K562 (cell line): ENCODE measurements at regions of chr3 and their contacts with region 1.

Region 1: GRCh38 chr3:138935848-138936740 is 10.8 kb downstream of the FOXL2 start:
- DNase-seq: peak; percentile 85 to 91 (median 88)
- ATAC-seq: peak; percentile 88
- H3K4me3 ChIP-seq: peak overlapping the region; percentile 45
- H3K27ac ChIP-seq: peak overlapping the region; percentile 54
- H3K4me1 ChIP-seq: peaks cover 4 to 43% of the 10 kb centered on the region in 2 experiments; a peak in 3 of 5 replicates
- H3K27me3 ChIP-seq: no peaks in the 10 kb centered on the region
- CTCF ChIP-seq: peak; percentile 83 to 88 (median 87)
- EP300 ChIP-seq: no peak
- POLR2A ChIP-seq: peak; percentile 58
- RAD21 ChIP-seq: peak; percentile 55 to 68

Region 2: GRCh38 chr3:138468886-138469285 is 467.2 kb before region 1 on chr3:
- CTCF ChIA-PET with region 1: no interaction called
- POLR2A ChIA-PET with region 1: no interaction called
- in situ Hi-C with region 1: loop called (anchors 10 kb)
- intact Hi-C with region 1: no loop called
- DNase-seq: no peak
- ATAC-seq: no peak
- H3K4me3 ChIP-seq: no peak overlapping the region
- H3K27ac ChIP-seq: no peak overlapping the region
- H3K4me1 ChIP-seq: no peaks in the 10 kb centered on the region; a peak in 2 of 5 replicates
- H3K27me3 ChIP-seq: peaks cover 0 to 10% of the 10 kb centered on the region in 2 experiments; a peak in 2 of 5 replicates
- CTCF ChIP-seq: no peak
- EP300 ChIP-seq: no peak
- POLR2A ChIP-seq: no peak
- RAD21 ChIP-seq: no peak

Region 3: GRCh38 chr3:139427283-139427993 is 491.3 kb after region 1 on chr3:
- CTCF ChIA-PET with region 1: no interaction called
- POLR2A ChIA-PET with region 1: no interaction called
- in situ Hi-C with region 1: no loop called
- intact Hi-C with region 1: no loop called
- DNase-seq: peak; percentile 69 to 72 (median 70)
- ATAC-seq: peak; percentile 96
- H3K4me3 ChIP-seq: no peak overlapping the region
- H3K27ac ChIP-seq: no peak overlapping the region
- H3K4me1 ChIP-seq: no peaks in the 10 kb centered on the region
- H3K27me3 ChIP-seq: no peaks in the 10 kb centered on the region
- CTCF ChIP-seq: peak; percentile 61 to 88 (median 75); a peak in 5 of 6 replicates
- EP300 ChIP-seq: no peak
- POLR2A ChIP-seq: no peak
- RAD21 ChIP-seq: peak; percentile 86 to 90

Region 4: DNA sequence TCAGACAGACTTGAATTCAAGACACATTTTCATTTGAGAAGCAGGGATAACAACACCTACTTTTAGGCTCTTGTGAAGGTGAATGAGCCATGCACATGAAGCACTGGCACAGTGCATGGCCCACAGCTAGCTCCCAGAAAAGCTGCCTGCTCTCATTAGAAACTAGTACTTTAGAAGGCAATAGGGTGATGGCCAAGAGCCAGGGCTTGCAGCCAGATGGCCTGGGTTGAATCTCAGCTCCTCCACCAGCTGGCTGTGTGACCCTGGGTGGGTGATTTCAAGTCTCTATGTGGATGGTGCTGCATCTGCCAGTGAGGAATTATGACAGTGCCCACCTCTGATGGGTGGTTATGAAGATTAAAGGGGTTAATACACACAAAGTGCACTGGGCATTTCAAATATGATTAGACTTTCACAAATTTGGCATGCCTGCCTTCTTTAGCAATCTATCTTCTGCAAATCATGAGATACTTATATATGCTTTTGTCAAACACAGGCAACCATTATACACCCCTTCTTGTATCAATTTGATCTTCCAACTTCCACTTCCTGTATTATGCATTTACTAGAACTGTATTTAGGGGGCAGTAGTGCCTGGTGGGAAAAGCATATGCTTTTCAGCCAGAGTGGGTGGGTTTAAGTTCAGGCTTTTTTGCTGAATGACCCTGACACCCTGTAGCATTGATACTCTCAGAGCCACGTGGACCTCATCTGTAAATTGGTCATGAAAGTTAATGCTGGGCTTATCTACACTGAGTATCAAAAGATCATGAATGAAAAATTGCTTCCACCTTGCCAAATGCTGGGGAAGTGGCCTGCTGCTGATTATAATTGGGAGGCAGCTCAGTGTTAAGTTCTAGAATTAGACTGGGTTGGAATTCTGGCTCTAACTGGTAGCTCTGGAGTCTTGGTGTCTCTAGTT is 638.2 kb after region 1 on chr3:
- CTCF ChIA-PET with region 1: no interaction called
- POLR2A ChIA-PET with region 1: no interaction called
- in situ Hi-C with region 1: no loop called
- intact Hi-C with region 1: no loop called
- DNase-seq: no peak
- ATAC-seq: no peak
- H3K4me3 ChIP-seq: no peak overlapping the region
- H3K27ac ChIP-seq: no peak overlapping the region
- H3K4me1 ChIP-seq: no peaks in the 10 kb centered on the region
- H3K27me3 ChIP-seq: no peaks in the 10 kb centered on the region
- CTCF ChIP-seq: peak in 2 of 3 experiments; percentile 3 to 16; a peak in 1 of 6 replicates
- EP300 ChIP-seq: no peak
- POLR2A ChIP-seq: no peak
- RAD21 ChIP-seq: no peak